ENCODE measurements at regions of chr1 and their contacts with region 1.

Region 1: DNA sequence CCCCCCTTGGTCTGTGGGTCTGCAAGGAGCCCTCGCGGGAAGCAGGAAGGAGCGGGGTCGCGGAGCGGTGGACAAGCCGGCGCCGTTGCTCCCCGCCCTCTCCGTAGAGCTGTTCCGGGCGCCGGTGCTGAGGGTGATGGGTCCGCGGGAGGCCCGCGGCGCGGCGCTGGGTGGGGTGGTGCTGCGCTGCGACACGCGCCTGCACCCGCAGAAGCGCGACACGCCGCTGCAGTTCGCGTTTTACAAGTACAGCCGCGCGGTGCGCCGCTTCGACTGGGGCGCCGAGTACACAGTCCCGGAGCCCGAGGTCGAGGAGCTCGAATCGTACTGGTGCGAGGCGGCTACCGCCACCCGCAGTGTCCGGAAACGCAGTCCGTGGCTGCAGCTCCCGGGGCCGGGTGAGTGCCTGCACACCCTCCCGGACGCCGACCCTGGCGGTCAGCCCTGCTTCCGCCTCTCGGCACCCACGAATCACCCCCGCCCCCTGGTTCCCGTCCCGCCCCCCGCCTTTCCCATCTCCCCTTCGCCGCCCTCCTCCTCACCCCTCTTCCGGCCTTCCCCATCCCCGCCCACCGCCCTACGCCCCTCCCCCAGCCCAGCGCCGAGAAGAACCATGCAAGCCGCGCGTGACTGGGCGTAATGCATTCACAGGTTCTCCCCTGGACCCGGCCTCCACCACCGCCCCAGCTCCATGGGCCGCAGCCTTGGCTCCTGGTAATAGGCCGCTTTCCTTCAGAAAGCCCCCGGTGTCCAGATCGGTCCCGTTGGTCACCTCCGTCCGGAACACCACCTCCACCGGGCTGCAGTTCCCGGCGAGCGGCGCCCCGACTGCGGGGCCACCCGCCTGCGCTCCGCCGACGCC is 5.5 kb downstream of the FCRLB start:
- DNase-seq: peak; percentile 47
- H3K4me3 ChIP-seq: peak overlapping the region; percentile 51 to 55 (median 52)
- H3K27ac ChIP-seq: peak overlapping the region; percentile 43
- H3K4me1 ChIP-seq: peaks cover 26% of the 10 kb centered on the region
- H3K27me3 ChIP-seq: no peaks in the 10 kb centered on the region
- CTCF ChIP-seq: no peak
- POLR2A ChIP-seq: peak; percentile 62

Region 2: DNA sequence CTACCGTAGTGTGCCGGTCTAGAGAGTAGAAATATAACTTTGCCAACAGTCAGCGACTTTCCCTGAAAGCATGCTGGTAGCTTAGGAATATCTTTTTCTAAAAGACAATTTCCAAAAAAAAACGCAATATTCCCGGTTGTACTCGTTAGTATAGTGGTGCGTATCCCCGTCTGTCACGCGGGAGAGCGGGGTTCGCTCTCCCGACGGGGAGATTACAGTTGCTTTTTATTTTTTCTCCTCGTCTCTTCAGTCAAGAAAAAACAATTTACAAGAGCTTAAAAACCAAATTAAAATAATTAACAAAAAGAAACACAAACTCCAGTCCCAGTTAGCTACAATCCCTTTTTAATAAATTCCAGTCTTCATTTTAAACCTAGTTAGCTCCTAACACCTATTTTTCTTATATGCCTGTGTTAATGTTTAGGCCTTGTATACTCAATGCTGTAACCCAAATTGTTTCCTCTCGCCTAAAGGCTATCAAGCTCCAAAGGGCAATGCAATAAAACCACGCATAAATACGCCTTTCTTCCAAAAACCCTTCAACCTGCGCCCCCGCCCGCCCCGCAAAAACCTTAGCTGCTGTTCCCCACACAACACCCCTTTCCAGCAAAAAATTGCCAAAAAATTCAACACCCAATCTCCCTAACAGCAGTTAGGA is 194.7 kb before region 1 on chr1:
- CTCF ChIA-PET with region 1: no interaction called
- POLR2A ChIA-PET with region 1: no interaction called
- dilution Hi-C with region 1: no loop called
- intact Hi-C with region 1: loop called (anchors 5 kb)
- DNase-seq: no peak
- H3K4me3 ChIP-seq: no peak overlapping the region
- H3K27ac ChIP-seq: no peak overlapping the region
- H3K4me1 ChIP-seq: peaks cover 12% of the 10 kb centered on the region
- H3K27me3 ChIP-seq: no peaks in the 10 kb centered on the region
- CTCF ChIP-seq: no peak
- POLR2A ChIP-seq: no peak

Region 3: GRCh38 chr1:161738627-161739287 is 11.9 kb after region 1 on chr1:
- CTCF ChIA-PET with region 1: interaction called, 16 read pairs
- POLR2A ChIA-PET with region 1: no interaction called
- dilution Hi-C with region 1: no loop called
- intact Hi-C with region 1: no loop called
- DNase-seq: peak; percentile 44
- H3K4me3 ChIP-seq: no peak overlapping the region
- H3K27ac ChIP-seq: no peak overlapping the region
- H3K4me1 ChIP-seq: peaks cover 3% of the 10 kb centered on the region
- H3K27me3 ChIP-seq: no peaks in the 10 kb centered on the region
- CTCF ChIP-seq: peak; percentile 39 to 43
- POLR2A ChIP-seq: no peak

Measured in endothelial cell of umbilical vein (primary cell).